Endothelial cell of umbilical vein (primary cell): ENCODE measurements at regions of chr9 and their contacts with region 1.

Region 1: GRCh38 chr9:113876151-113876992 is at the start of gene ZNF618:
- DNase-seq: peak; percentile 47
- H3K4me3 ChIP-seq: peak within 1 kb of the TSS; percentile 98 to 100 (median 98)
- H3K27ac ChIP-seq: peak within 1 kb of the TSS; percentile 77
- H3K4me1 ChIP-seq: peaks cover 27% of the 10 kb centered on the region
- H3K27me3 ChIP-seq: no peaks in the 10 kb centered on the region
- CTCF ChIP-seq: peak in 1 of 2 donors; percentile 28
- POLR2A ChIP-seq: no peak
- total RNA-seq, gene ZNF618: 60.6 and 80.3 TPM in 2 replicates

Region 2: GRCh38 chr9:113682297-113682771 is 194.0 kb before region 1 on chr9:
- CTCF ChIA-PET with region 1: no interaction called
- POLR2A ChIA-PET with region 1: no interaction called
- dilution Hi-C with region 1: no loop called
- intact Hi-C with region 1: loop called (anchors 1 kb)
- DNase-seq: peak; percentile 85
- H3K4me3 ChIP-seq: no peak overlapping the region
- H3K27ac ChIP-seq: no peak overlapping the region
- H3K4me1 ChIP-seq: no peaks in the 10 kb centered on the region
- H3K27me3 ChIP-seq: peaks cover 9 to 11% of the 10 kb centered on the region in 2 experiments
- CTCF ChIP-seq: peak; percentile 92 to 95
- POLR2A ChIP-seq: no peak

Region 3: DNA sequence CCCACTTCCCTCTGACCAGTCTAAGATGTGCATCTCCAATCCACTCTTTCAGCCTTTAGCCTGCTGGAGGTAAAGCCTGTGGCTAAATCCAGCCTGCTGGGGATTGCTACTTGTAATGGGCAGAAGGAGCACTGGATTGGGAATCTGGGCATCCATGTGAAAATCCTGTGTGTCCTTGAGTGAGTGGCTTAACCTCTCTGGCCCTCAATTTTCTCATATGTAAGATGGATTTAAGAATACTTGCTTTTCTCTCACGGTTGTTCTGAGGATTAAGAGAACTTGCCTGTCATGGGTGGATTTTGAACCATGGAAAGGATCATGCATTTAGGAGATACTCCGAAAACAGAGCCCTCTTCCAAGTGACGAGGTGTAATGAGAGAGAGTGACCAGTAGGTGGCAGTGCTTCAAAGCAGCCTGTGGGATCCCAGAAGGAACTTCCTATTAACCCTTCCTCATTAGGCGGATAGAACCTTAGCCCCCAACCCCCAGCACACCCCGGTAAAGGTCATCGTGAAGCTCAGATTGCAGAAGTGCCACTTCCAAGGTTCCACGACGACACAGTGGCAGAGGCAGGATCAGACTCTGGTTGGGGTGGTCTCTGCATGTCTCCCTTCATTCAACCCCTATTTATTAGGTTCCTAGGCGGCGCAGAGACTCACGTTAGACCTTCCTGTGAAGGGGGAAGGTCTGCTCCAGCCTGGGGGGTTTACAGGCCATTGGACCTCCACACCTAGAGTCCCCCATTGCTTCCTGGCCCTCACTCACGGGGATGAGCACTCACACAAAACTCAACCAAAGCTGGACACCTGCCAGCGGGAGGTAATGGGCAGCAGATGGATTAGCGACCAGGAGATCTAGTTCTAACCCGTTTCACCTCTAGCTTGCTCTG is 69.0 kb before region 1 on chr9:
- CTCF ChIA-PET with region 1: interaction called, 11 read pairs
- POLR2A ChIA-PET with region 1: no interaction called
- dilution Hi-C with region 1: no loop called
- intact Hi-C with region 1: loop called (anchors 1 kb)
- DNase-seq: peak; percentile 73
- H3K4me3 ChIP-seq: peak overlapping the region in 1 of 3 experiments; percentile 25
- H3K27ac ChIP-seq: no peak overlapping the region
- H3K4me1 ChIP-seq: no peaks in the 10 kb centered on the region
- H3K27me3 ChIP-seq: no peaks in the 10 kb centered on the region
- CTCF ChIP-seq: peak; percentile 84 to 87
- POLR2A ChIP-seq: no peak

Region 4: GRCh38 chr9:113911850-113912557 is 35.6 kb after region 1 on chr9:
- CTCF ChIA-PET with region 1: no interaction called
- POLR2A ChIA-PET with region 1: no interaction called
- dilution Hi-C with region 1: no loop called
- intact Hi-C with region 1: no loop called
- DNase-seq: no peak
- H3K4me3 ChIP-seq: no peak overlapping the region
- H3K27ac ChIP-seq: no peak overlapping the region
- H3K4me1 ChIP-seq: no peaks in the 10 kb centered on the region
- H3K27me3 ChIP-seq: no peaks in the 10 kb centered on the region
- CTCF ChIP-seq: no peak
- POLR2A ChIP-seq: no peak

Region 5: GRCh38 chr9:113929634-113930389 is 53.4 kb after region 1 on chr9:
- CTCF ChIA-PET with region 1: interaction called, 17 read pairs
- POLR2A ChIA-PET with region 1: interaction called, 5 read pairs
- dilution Hi-C with region 1: no loop called
- intact Hi-C with region 1: loop called (anchors 1 kb)
- DNase-seq: peak; percentile 98
- H3K4me3 ChIP-seq: no peak overlapping the region
- H3K27ac ChIP-seq: peak overlapping the region; percentile 70
- H3K4me1 ChIP-seq: peaks cover 30% of the 10 kb centered on the region
- H3K27me3 ChIP-seq: no peaks in the 10 kb centered on the region
- CTCF ChIP-seq: no peak
- POLR2A ChIP-seq: peak; percentile 18

Region 6: GRCh38 chr9:113963017-113963620 is 86.7 kb after region 1 on chr9:
- CTCF ChIA-PET with region 1: interaction called, 56 read pairs
- POLR2A ChIA-PET with region 1: no interaction called
- dilution Hi-C with region 1: no loop called
- intact Hi-C with region 1: loop called (anchors 2 kb)
- DNase-seq: peak; percentile 64
- H3K4me3 ChIP-seq: no peak overlapping the region
- H3K27ac ChIP-seq: no peak overlapping the region
- H3K4me1 ChIP-seq: peaks cover 18% of the 10 kb centered on the region
- H3K27me3 ChIP-seq: no peaks in the 10 kb centered on the region
- CTCF ChIP-seq: peak; percentile 78 to 86
- POLR2A ChIP-seq: no peak